ENCODE measurements at regions of chr3 and their contacts with region 1.

Region 1: GRCh38 chr3:123449102-123449996 is 459 bp upstream of the ADCY5 start:
- DNase-seq: no peak
- H3K4me3 ChIP-seq: peak overlapping the region; percentile 40 to 78 (median 56)
- H3K27ac ChIP-seq: peak overlapping the region; percentile 64 to 91 (median 82)
- H3K4me1 ChIP-seq: peaks cover 12 to 38% (median 21%) of the 10 kb centered on the region in 3 donors
- H3K27me3 ChIP-seq: peaks cover 0 to 74% (median 4%) of the 10 kb centered on the region in 4 donors
- CTCF ChIP-seq: no peak
- POLR2A ChIP-seq: peak in 1 of 4 donors; percentile 13

Region 2: DNA sequence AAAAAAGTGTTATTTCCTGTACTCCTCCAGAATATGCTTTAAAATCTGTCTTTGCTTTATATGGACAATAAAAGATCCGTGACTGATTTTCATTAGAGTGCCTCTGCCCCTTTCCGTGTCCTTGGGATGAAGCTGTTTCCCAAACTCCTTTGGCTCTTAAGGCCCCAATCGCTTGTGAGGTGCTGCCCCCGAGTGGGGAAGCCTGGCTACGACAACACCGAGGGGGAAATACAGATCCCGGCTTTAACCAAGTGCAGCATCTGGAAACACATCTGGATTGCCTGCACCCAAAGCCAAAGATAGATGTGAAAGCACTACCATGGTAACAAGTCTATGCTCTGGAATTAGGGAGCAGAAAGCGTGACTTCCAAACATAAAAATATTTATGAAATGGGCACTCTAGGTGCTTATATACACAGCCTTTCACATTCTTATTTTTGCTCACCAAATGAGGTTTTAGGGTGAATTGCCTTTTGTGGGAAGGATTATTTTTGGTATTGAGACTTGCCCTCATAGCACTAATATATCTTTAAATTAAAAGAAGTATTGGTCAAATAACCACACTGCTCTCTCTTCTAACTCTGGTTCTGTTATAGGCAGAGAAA is 40.2 kb after region 1 on chr3:
- intact Hi-C with region 1: loop called (anchors 2 kb)
- DNase-seq: no peak
- H3K4me3 ChIP-seq: no peak overlapping the region
- H3K27ac ChIP-seq: peak overlapping the region in 3 of 4 donors; percentile 18 to 54 (median 45)
- H3K4me1 ChIP-seq: no peaks in the 10 kb centered on the region
- H3K27me3 ChIP-seq: no peaks in the 10 kb centered on the region
- CTCF ChIP-seq: peak; percentile 31 to 85 (median 76)
- POLR2A ChIP-seq: no peak

Measured in esophagus squamous epithelium (tissue), 5 donors.